ENCODE measurements at regions of chr2 and their contacts with region 1.

Region 1: DNA sequence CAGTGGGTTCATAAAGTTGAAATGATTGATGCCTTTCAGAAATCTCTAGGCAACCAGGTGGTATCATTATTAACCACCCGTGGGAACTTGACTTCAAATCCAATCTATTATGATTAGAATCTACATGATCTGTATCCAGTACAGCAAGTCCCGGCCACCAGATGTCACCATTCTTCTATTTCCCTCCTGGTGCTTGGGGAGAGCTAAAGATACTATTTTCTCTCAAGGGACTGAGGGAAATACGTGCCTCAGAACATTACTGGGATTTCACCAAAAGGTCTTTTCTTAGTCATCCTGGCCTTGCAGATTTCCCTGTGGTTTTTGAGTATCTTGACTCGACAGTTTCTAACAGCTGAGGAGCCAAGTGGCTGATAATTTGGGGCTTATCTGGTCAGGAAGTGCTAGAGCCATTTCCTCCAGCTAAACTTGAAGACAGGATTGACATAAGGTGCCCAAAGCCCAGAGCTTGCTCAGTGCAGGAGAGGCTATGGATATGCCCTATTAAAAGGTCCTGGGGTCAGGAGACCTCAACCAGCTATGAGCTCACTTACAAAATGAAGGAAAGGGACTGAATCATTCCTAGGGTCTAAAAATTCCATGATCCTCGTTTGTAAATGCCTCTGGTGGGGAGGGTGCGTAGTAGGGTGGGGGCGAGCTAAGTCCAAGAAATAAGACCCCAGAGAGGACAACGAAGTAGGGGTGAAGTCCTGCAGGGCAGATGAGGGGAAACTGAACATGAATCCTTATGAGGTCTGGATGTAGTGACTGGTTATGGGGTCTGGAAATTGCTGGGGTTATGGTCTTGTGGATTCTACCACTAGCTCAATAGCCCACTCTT is 135.4 kb upstream of the MGAT5 start:
- DNase-seq: peak; percentile 50
- ATAC-seq: peak; percentile 49
- H3K4me3 Mint-ChIP-seq: peak overlapping the region; percentile 99
- H3K27ac Mint-ChIP-seq: peak overlapping the region; percentile 46
- H3K4me1 Mint-ChIP-seq: peaks cover 38% of the 10 kb centered on the region
- H3K27me3 Mint-ChIP-seq: no peaks in the 10 kb centered on the region
- CTCF ChIP-seq: no peak

Region 2: DNA sequence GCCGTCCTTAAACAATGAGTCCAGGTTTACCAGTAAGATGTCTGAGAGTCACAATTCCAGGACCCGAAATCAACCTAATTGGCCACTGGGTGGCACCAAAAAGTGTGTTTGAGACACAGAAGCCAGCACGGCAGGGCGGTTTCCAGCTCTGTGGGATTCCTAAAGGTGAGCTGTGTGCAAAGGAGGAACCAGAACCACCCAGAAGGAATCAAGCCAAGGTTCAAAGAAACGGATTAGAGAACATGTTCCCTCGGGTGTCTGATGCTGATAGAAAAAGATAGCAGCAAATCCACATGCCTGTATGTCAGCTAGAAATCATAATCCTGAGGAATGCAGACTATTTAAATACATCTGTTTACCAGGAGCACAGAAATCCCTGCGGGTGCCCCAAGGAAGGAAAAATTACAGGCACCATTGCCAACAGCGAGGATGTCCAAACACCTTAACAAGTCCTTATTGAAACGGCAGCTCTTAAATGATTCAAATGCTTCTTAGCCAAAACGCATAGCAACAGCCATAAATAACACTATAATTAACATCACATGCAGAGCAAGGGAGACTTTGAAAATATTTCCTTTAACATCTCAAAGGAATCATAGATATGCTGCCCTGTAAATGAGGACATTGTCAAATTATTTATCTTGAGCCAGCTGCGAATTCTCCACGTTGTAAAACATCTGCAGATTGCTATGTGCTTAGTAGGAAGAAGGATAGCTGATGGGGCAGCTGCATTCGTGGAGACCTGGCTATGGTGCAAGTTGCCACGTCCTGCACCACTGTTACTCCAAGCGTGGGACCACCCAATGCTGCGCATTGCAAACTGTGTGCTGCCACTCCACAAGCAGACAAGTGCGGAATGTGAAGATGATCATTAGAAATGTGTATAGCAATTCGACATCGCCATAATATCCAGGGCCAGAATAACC is 231.5 kb before region 1 on chr2:
- CTCF ChIA-PET with region 1: interaction called, 96 read pairs
- POLR2A ChIA-PET with region 1: interaction called, 3 read pairs
- intact Hi-C with region 1: loop called (anchors 1 kb)
- DNase-seq: peak; percentile 36
- ATAC-seq: peak; percentile 70
- H3K4me3 Mint-ChIP-seq: no peak overlapping the region
- H3K27ac Mint-ChIP-seq: no peak overlapping the region
- H3K4me1 Mint-ChIP-seq: peaks cover 10% of the 10 kb centered on the region
- H3K27me3 Mint-ChIP-seq: peaks cover 7% of the 10 kb centered on the region
- CTCF ChIP-seq: no peak

Region 3: GRCh38 chr2:134146620-134147019 is 28.1 kb after region 1 on chr2:
- CTCF ChIA-PET with region 1: interaction called, 9 read pairs
- POLR2A ChIA-PET with region 1: interaction called, 9 read pairs
- intact Hi-C with region 1: loop called (anchors 2 kb)
- DNase-seq: no peak
- ATAC-seq: peak; percentile 49
- H3K4me3 Mint-ChIP-seq: no peak overlapping the region
- H3K27ac Mint-ChIP-seq: peak overlapping the region; percentile 74
- H3K4me1 Mint-ChIP-seq: peaks cover 91% of the 10 kb centered on the region
- H3K27me3 Mint-ChIP-seq: no peaks in the 10 kb centered on the region
- CTCF ChIP-seq: no peak

Region 4: DNA sequence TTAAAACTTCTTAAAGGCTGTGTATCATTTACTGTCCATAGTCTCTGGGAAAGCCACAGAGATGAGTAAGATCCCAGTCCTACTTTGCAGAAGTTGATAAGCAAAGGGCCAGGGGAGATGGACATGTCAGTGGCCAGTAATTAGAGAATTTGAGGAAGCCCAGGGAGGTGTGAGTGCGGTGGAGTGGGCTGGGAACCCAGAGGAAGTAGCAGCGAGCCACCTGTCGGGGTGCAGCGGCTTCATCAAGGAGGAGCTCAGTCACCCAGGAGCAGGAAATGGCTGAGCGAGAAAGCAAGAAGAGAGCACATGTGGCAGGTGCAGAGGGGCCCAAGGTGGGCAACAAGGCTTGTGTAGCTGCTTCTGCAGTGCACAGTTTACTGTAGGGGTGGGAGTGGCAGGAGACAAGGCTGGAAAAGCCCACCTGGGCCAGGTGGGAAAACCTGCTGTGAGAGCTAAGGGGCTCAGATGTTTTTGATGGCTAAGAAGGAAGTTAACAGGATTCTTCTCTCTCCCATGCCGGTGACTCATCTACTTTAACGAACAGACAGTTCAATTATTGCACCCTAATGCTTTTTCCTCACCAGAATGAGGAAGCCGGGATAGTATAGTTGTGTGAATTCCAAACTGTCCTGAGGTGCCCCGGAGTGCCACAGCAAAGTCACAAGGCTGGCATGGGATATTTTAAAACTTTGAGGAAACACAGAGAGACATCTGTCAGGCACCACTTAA is 100.6 kb after region 1 on chr2:
- CTCF ChIA-PET with region 1: interaction called, 11 read pairs
- POLR2A ChIA-PET with region 1: interaction called, 8 read pairs
- intact Hi-C with region 1: loop called (anchors 1 kb)
- DNase-seq: peak; percentile 38
- ATAC-seq: peak; percentile 66
- H3K4me3 Mint-ChIP-seq: peak overlapping the region; percentile 53
- H3K27ac Mint-ChIP-seq: peak overlapping the region; percentile 89
- H3K4me1 Mint-ChIP-seq: peaks cover 71% of the 10 kb centered on the region
- H3K27me3 Mint-ChIP-seq: no peaks in the 10 kb centered on the region
- CTCF ChIP-seq: no peak

Region 5: DNA sequence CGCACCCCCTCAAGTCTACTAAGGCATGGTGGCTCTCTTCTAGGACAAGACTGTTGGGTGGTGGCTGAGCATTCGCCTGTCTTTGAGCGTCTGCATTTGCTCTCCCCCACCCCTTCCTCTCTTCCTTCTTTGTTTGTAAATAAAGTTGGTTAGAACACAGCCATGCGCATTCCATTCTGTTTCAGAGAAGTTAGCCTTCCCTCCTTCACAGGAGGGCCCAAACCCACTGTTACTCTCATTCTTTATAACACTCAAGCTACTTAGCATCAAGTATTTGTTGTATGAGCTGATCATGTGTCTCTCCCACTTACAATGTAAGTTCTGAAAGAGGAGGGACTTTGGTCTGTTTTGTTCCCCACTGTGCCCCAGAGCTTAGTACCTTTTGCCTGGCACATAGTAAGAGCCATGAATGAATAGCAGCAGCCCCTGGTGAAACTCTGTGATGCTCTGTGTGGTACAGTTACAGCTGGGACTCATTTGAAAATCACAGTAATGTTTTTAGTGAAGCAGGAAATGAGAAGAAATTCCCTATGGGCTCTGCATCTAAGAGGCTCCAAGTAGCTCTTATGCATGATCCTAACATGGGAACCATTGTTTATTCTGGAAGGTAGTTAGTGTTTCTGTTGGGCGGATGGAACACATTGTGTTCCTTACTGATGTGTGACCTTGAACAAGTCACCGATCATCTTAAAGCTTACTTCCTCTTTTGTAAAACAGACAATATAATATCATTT is 143.1 kb after region 1 on chr2:
- CTCF ChIA-PET with region 1: interaction called, 21 read pairs
- POLR2A ChIA-PET with region 1: interaction called, 9 read pairs
- intact Hi-C with region 1: loop called (anchors 1 kb)
- DNase-seq: no peak
- ATAC-seq: peak; percentile 66
- H3K4me3 Mint-ChIP-seq: peak overlapping the region; percentile 38
- H3K27ac Mint-ChIP-seq: peak overlapping the region; percentile 97
- H3K4me1 Mint-ChIP-seq: peaks cover 91% of the 10 kb centered on the region
- H3K27me3 Mint-ChIP-seq: no peaks in the 10 kb centered on the region
- CTCF ChIP-seq: no peak

Region 6: DNA sequence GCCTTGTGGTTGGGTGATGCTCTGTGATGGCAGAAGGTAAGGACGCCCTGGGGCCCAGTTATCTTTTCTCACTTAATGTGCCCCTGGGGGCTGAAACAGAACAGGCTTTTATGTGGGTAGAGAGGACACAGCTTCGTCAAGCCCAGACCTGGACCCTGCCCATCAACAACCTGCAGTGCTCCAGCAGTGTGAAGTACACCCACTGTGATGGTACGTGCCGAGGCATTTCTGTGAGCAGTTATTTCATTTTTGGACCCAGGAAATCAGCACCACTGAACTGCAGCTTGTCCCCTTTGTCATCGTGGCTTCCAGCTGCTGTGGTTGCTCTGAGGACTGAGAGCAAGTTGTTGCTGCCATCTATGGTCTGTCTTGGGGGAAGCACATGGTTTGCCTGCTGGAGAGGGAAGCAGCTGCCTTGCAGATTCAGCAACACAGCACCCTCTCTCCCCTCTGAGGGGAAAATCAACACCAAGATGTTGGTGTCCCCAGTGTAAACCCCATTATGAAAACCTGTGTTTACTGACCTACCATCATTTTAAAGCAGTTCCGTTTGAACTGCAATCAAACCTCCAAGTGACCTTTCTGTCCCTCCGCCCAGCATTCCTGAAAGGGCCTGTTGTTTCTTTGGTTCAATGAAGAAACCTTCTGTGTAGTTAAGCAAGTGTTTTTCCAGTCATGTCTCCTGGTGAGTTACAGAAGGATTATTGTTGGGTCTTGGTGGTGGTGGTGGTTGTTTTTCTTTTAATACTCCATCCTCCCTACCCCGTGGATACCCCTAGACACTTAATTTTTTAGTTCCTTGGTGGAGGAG is 293.5 kb after region 1 on chr2:
- CTCF ChIA-PET with region 1: interaction called, 243 read pairs
- POLR2A ChIA-PET with region 1: interaction called, 47 read pairs
- intact Hi-C with region 1: loop called (anchors 1 kb)
- DNase-seq: peak; percentile 55
- ATAC-seq: peak; percentile 97
- H3K4me3 Mint-ChIP-seq: peak overlapping the region; percentile 46
- H3K27ac Mint-ChIP-seq: peak overlapping the region; percentile 86
- H3K4me1 Mint-ChIP-seq: peaks cover 46% of the 10 kb centered on the region
- H3K27me3 Mint-ChIP-seq: no peaks in the 10 kb centered on the region
- CTCF ChIP-seq: no peak

Region 7: GRCh38 chr2:134918526-134919340 is 800.2 kb after region 1 on chr2 and contains the start of gene CCNT2:
- CTCF ChIA-PET with region 1: no interaction called
- POLR2A ChIA-PET with region 1: interaction called, 7 read pairs
- intact Hi-C with region 1: loop called (anchors 1 kb)
- DNase-seq: peak; percentile 100
- ATAC-seq: peak; percentile 83
- H3K4me3 Mint-ChIP-seq: peak within 1 kb of the TSS; percentile 98
- H3K27ac Mint-ChIP-seq: peak within 1 kb of the TSS; percentile 99
- H3K4me1 Mint-ChIP-seq: peaks cover 54% of the 10 kb centered on the region
- H3K27me3 Mint-ChIP-seq: peaks cover 3% of the 10 kb centered on the region
- CTCF ChIP-seq: no peak
- total RNA-seq, gene CCNT2: 62.9 and 73.4 TPM in 2 replicates

Measured in activated B cell treated with CpG ODN at 0.5 μM for 24 hours (primary cell).